ENCODE measurements at regions of chr10 and their contacts with region 1.

Region 1: DNA sequence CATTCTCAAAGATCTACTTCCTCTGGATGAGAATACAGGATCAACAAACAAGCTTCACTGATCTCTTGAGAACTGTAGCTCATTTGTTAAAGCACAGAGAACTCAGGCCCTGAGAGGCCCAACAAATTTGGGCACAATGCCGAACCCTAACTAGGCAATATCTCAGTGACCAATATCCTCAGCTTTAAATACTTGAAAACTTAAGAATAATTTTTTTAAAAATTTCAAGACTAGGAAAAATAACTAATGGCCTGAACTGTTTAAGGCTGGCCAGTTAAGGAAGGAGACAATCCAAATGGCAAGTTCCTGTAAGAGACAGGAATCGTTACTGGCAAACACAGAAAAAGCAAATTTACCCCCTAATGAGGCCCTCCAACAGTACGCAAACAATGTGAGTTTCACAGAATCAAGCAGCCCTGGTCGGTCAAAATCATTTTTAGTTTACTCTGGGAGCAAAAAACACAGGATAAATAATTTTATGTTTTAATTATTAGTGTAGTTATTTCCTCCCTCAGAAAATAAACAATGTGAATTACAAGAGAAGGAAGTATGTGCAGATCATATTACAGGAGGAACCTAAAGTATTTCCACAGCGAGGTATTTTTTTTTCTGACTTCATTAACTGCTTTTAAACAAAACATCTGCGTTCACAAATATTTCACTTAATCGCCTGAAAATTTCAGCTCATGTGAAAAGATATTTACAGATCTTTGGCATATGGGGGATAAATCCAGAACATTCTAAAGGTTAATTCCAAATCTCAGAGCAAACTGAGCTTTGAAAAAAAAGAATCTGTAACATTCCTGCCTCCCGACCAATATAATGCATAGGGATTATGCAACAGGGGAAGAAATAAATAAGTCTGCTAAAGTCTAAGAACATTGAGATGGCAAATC is 39.5 kb downstream of the NT5C2 start:
- DNase-seq: no peak
- H3K4me3 ChIP-seq: peak overlapping the region; percentile 1 to 18 (median 5)
- H3K27ac ChIP-seq: peak overlapping the region; percentile 72 to 82
- H3K4me1 ChIP-seq: no peaks in the 10 kb centered on the region
- H3K27me3 ChIP-seq: no peaks in the 10 kb centered on the region
- CTCF ChIP-seq: no peak
- POLR2A ChIP-seq: no peak

Region 2: GRCh38 chr10:101986625-101986973 is 1167.0 kb before region 1 on chr10:
- intact Hi-C with region 1: loop called (anchors 10 kb)
- DNase-seq: no peak
- H3K4me3 ChIP-seq: no peak overlapping the region
- H3K27ac ChIP-seq: no peak overlapping the region
- H3K4me1 ChIP-seq: no peaks in the 10 kb centered on the region
- H3K27me3 ChIP-seq: no peaks in the 10 kb centered on the region
- CTCF ChIP-seq: no peak
- POLR2A ChIP-seq: no peak

Region 3: GRCh38 chr10:103618575-103619423 is 465.2 kb after region 1 on chr10:
- intact Hi-C with region 1: no loop called
- DNase-seq: no peak
- H3K4me3 ChIP-seq: no peak overlapping the region
- H3K27ac ChIP-seq: peak overlapping the region; percentile 42 to 80
- H3K4me1 ChIP-seq: peaks cover 0 to 32% of the 10 kb centered on the region in 2 donors
- H3K27me3 ChIP-seq: no peaks in the 10 kb centered on the region
- CTCF ChIP-seq: no peak
- POLR2A ChIP-seq: no peak

Measured in breast epithelium (tissue), 4 donors.